ENCODE measurements at regions of chr9 and their contacts with region 1.

Region 1: DNA sequence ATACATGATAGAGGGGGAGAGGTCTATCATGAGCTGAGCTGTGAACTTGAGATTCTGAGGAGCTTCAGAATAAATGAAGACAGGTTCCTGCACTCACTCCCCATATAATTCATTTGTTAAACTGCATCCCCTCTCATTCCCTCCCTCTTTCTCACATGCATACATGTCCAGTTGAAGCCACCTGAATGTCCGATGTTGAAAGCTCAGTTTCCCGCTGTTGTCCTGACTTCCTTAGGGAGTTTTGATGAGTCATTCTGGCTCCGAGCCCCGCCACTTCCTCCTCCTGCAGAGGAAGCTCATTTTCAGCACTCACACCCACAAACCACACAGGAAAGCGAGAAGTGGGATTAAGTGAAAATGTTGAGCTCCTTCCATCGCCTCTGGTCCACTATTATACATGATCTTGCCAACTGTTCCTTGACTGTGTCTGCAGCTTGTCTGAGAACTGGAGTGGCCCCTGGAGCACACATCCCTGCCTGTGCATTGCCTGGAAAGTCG is 121.2 kb downstream of the CEMIP2 start:
- DNase-seq: peak; percentile 83 to 87 (median 84)
- ATAC-seq: peak in 3 of 4 donors; percentile 80 to 95 (median 88)
- H3K4me3 ChIP-seq: peak overlapping the region in 2 of 12 donors; percentile 1 to 10
- H3K27ac ChIP-seq: peak overlapping the region in 9 of 12 donors; percentile 9 to 88 (median 36)
- H3K4me1 ChIP-seq: peaks cover 0 to 63% (median 11%) of the 10 kb centered on the region in 12 donors
- H3K27me3 ChIP-seq: no peaks in the 10 kb centered on the region
- CTCF ChIP-seq: no peak
- POLR2A ChIP-seq: no peak

Region 2: DNA sequence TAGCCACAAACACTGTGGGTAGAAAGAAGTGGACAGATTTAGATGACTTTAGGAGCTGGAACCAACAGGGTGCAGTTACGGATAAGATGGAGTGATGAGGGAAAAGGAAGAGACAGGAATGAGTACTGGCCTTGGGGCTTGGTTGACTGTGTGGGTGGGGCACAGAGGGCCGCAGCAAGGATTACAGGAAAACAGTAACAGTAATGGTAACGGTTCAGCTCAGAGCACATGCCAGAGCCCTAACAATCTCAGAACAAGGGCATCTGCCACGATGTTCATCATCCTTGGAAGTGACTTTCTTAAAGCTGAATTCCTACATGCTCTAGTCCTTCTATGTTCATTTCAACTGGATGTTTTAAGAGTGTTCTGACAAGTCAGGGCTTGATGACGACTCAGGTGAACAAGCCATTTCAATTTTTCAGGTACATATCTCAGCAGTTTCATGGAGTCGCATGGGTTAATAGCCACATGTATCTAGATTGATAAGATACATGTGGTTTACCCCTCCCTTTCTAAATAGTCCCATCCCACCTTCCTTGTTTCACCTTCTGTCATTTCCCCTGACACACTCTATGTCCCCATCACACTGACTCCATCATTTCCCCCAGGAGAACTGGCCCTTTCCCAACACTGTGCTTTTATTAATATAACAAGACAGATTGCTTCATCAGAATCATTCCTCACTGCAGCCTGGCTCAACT is 56.2 kb after region 1 on chr9:
- intact Hi-C with region 1: loop called in 1 of 10 experiments (anchors 10 kb)
- DNase-seq: no peak
- ATAC-seq: peak in 3 of 4 donors; percentile 24 to 79 (median 72)
- H3K4me3 ChIP-seq: no peak overlapping the region
- H3K27ac ChIP-seq: no peak overlapping the region
- H3K4me1 ChIP-seq: peaks cover 0 to 19% (median 4%) of the 10 kb centered on the region in 12 donors
- H3K27me3 ChIP-seq: no peaks in the 10 kb centered on the region
- CTCF ChIP-seq: no peak
- POLR2A ChIP-seq: no peak

Measured in heart left ventricle (tissue), 16 donors.